Endothelial cell of umbilical vein (primary cell): ENCODE measurements at regions of chr4 and their contacts with region 1.

Region 1: GRCh38 chr4:138522366-138522765 is 280.2 kb upstream of the SLC7A11 start:
- DNase-seq: peak; percentile 21
- H3K4me3 ChIP-seq: no peak overlapping the region
- H3K27ac ChIP-seq: no peak overlapping the region
- H3K4me1 ChIP-seq: no peaks in the 10 kb centered on the region
- H3K27me3 ChIP-seq: no peaks in the 10 kb centered on the region
- CTCF ChIP-seq: peak; percentile 27 to 40
- POLR2A ChIP-seq: no peak

Region 2: GRCh38 chr4:136650541-136651277 is 1871.7 kb before region 1 on chr4:
- CTCF ChIA-PET with region 1: no interaction called
- POLR2A ChIA-PET with region 1: no interaction called
- dilution Hi-C with region 1: no loop called
- intact Hi-C with region 1: no loop called
- DNase-seq: peak; percentile 63
- H3K4me3 ChIP-seq: no peak overlapping the region
- H3K27ac ChIP-seq: peak overlapping the region; percentile 54
- H3K4me1 ChIP-seq: peaks cover 16% of the 10 kb centered on the region
- H3K27me3 ChIP-seq: no peaks in the 10 kb centered on the region
- CTCF ChIP-seq: no peak
- POLR2A ChIP-seq: no peak

Region 3: DNA sequence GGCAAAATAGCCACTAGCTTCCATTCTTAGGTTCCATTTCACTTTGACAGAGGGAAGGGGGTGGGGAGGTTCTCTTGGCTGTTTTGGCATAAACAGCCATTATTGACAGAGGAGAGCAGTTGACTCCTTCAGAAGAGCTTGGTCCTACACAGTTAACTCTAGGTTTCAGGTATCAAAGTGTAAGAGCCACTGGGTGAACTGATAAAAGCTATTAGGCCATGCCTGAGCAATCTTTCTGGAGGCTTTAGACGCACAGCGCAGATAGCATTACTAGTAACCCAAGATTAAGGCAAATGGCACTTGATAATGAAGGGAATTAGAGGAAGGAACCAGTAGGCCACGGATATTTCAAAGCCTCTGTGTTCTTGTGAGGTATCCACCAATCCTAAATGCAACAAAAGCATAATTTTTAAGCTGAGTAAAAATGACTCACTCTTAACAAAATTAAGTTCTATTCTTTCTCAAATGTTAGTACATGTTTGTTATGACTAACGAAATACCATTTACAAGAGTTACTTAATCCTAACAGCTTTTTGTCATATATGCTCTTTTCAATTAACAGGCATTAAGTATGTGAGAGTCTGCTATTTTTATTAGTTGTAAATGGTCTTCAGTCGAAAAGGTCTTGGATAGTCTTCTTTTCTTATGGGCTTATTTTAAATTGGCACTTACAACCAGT is 333.8 kb before region 1 on chr4:
- CTCF ChIA-PET with region 1: interaction called, 34 read pairs
- POLR2A ChIA-PET with region 1: no interaction called
- dilution Hi-C with region 1: no loop called
- intact Hi-C with region 1: loop called (anchors 2 kb)
- DNase-seq: no peak
- H3K4me3 ChIP-seq: no peak overlapping the region
- H3K27ac ChIP-seq: no peak overlapping the region
- H3K4me1 ChIP-seq: peaks cover 17% of the 10 kb centered on the region
- H3K27me3 ChIP-seq: no peaks in the 10 kb centered on the region
- CTCF ChIP-seq: no peak
- POLR2A ChIP-seq: no peak